WTC11 (cell line): ENCODE measurements at regions of chr5 and their contacts with region 1.

Region 1: DNA sequence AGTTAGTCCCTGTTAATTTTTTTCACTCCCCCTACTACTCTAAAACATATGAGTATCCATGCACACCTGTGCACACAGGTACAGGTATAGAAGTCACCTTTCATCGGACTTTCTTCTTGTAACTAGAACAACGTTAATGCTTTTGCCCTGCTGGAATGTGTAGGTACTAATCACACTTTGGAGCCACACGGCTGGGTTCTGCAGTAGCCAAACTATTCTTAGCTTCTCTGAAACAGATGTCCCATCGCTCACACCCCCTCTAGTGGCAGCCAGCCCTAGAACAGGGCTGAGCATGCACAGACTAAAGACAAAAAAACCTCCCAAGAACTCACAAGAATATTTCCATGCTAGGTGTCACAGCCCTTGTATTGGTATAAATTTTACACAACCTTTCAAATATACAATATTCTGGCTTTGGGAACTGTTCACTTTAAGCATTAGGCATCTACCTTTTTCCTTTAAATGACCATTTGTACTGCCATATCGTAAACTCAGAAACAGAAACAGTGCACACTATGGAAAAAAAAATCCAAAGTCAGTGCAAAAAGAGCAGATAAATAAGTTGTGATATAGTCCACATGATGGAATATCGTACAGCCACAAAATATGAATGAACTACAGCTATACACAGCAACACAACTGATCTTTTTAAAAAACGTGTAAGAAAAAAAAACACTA is 64.0 kb downstream of the RETREG1 start:
- DNase-seq: peak; percentile 83
- ATAC-seq: peak; percentile 99
- H3K4me3 Mint-ChIP-seq: no peak overlapping the region
- H3K27ac Mint-ChIP-seq: no peak overlapping the region
- H3K4me1 Mint-ChIP-seq: peaks cover 6% of the 10 kb centered on the region
- H3K27me3 Mint-ChIP-seq: no peaks in the 10 kb centered on the region
- CTCF ChIP-seq: peak; percentile 55; the same call in 1 of the 2 replicates

Region 2: GRCh38 chr5:16464664-16465543 is 87.9 kb before region 1 on chr5:
- CTCF ChIA-PET with region 1: no interaction called
- POLR2A ChIA-PET with region 1: no interaction called
- DNase-seq: no peak
- ATAC-seq: no peak
- H3K4me3 Mint-ChIP-seq: peak overlapping the region; percentile 97
- H3K27ac Mint-ChIP-seq: peak overlapping the region; percentile 96
- H3K4me1 Mint-ChIP-seq: peaks cover 29% of the 10 kb centered on the region
- H3K27me3 Mint-ChIP-seq: no peaks in the 10 kb centered on the region
- CTCF ChIP-seq: no peak

Region 3: DNA sequence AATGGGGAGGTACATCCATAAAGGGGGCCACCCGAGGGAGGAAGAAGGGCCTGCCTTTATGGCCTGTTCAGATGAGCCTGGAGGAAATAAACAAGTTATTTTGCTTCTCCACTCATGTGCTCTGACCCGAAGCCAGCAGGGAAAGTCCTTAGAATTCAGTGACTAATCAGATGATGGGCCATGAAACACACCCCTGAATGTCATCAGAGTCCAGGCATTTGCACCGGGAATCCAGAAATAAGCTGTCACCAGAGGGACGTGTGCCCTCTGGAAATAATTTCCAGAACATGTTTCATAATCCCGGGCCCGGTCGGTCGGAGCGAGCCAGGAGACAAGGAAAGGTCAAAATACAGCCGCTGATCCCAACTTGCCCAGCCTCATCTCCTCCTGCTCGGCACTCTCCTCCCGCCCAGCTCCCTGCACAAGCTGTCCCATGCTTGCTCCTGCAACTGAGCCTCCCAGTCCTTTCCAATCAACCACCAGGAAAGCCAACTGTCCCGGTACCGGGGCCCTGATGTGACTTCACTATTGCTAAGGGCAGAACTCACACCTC is 13.6 kb before region 1 on chr5:
- CTCF ChIA-PET with region 1: interaction called, 13 read pairs
- POLR2A ChIA-PET with region 1: no interaction called
- DNase-seq: no peak
- ATAC-seq: no peak
- H3K4me3 Mint-ChIP-seq: no peak overlapping the region
- H3K27ac Mint-ChIP-seq: 0 out of 2 replicates have a peak overlapping the region, but pooled peaks have one; percentile 8
- H3K4me1 Mint-ChIP-seq: 0 out of 2 replicates have a peak, but pooled peaks cover 7% of the 10 kb centered on the region
- H3K27me3 Mint-ChIP-seq: no peaks in the 10 kb centered on the region; the same call in 1 of the 2 replicates
- CTCF ChIP-seq: no peak

Region 4: DNA sequence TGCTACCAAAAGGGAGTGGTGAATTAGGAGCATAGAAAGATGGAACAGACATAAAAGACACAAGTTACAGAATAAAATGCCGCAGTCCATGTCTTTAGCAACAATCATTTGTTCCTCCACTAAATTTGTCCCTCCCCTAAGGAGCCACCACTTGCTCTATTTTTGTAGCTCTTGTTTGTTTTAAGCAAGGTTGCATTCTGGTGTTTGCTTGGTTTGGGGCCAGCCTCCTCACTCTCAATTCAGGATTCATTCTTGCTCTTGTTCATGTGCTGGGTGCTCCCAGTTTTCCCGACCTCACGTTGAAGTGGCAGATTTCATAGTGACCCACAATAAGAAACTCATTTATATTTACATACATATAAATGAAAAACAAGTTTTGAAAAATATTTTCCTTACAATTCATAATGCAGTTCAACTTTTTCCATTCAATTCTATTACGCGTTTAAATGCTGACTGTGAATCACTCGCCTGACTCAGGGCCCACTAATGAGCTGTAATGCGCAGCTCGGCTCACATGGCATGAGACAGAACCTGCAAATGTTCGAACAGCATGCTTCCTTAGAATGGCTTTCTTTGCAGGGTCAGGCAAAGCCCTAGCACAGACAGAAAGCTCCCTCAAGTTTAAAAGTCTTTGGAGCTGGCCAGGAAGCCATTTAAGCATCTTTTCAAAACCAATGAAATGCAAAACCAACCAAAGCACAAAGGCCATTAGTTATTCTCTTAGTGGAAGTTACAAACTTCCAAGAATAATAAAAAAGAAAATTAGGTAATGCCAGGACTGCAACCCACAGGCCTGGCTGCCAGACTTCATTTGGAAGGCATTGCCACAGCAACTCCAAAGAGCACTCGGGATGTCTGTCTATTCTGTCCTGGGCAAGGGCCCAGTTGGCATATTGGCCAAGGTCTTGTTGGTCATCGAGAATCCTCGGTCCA is 22.2 kb after region 1 on chr5:
- CTCF ChIA-PET with region 1: interaction called, 11 read pairs
- POLR2A ChIA-PET with region 1: no interaction called
- DNase-seq: no peak
- ATAC-seq: peak; percentile 91
- H3K4me3 Mint-ChIP-seq: no peak overlapping the region
- H3K27ac Mint-ChIP-seq: peak overlapping the region; percentile 89
- H3K4me1 Mint-ChIP-seq: peaks cover 49% of the 10 kb centered on the region
- H3K27me3 Mint-ChIP-seq: no peaks in the 10 kb centered on the region
- CTCF ChIP-seq: no peak

Region 5: DNA sequence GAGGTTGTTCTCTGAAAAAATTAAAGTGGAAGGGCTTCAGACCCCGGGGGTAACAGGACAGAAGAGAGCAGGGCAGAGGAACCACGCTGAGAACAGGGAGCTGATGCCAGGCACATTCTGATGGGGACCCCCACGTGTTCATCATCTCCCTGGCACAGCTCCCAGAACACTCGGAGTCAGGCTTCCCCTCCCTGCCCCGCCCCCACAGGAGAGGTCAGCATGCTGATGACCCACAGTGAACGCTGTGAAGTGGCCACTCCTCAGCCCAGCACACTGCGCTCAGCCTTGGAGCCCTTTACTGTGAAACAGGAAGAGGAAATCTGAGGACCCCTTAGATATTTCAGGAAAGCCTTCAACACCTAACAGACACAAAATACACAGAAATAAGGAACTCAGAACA is 47.6 kb after region 1 on chr5:
- CTCF ChIA-PET with region 1: no interaction called
- POLR2A ChIA-PET with region 1: no interaction called
- DNase-seq: no peak
- ATAC-seq: no peak
- H3K4me3 Mint-ChIP-seq: no peak overlapping the region
- H3K27ac Mint-ChIP-seq: no peak overlapping the region
- H3K4me1 Mint-ChIP-seq: peaks cover 13% of the 10 kb centered on the region
- H3K27me3 Mint-ChIP-seq: no peaks in the 10 kb centered on the region
- CTCF ChIP-seq: no peak